GM12878 (cell line): ENCODE measurements at regions of chr5 and their contacts with region 1.

Region 1: DNA sequence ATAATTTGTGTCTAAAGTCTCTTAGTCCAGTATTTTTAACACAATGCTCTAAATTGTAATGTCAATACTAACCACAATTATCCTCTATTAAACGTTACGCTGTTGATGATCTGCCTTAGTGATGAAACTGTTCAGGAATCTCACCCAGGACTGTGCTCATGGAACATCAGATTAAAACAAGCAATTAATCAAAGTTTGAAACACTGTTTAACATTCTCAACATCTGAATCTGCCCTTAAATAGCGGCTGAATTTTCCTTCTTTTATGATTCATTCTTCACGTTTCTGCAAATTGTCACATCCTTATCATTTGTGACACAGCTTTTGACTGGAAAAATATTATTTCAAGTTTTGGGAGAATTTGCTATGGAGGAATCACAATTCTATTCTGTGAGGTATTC is 113.8 kb downstream of the MARCHF11 start:
- DNase-seq: no peak
- ATAC-seq: no peak
- H3K4me3 ChIP-seq: no peak overlapping the region
- H3K27ac ChIP-seq: no peak overlapping the region
- H3K4me1 ChIP-seq: no peaks in the 10 kb centered on the region
- H3K27me3 ChIP-seq: no peaks in the 10 kb centered on the region
- CTCF ChIP-seq: no peak
- EP300 ChIP-seq: no peak
- POLR2A ChIP-seq: no peak
- RAD21 ChIP-seq: no peak

Region 2: GRCh38 chr5:16005225-16005624 is 60.6 kb before region 1 on chr5:
- CTCF ChIA-PET with region 1: no interaction called
- POLR2A ChIA-PET with region 1: no interaction called
- RAD21 ChIA-PET with region 1: no interaction called
- SMC1A ChIA-PET with region 1: no interaction called
- in situ Hi-C with region 1: no loop called
- intact Hi-C with region 1: loop called (anchors 1 kb)
- DNase-seq: peak; percentile 9
- ATAC-seq: peak; percentile 99
- H3K4me3 ChIP-seq: no peak overlapping the region
- H3K27ac ChIP-seq: no peak overlapping the region
- H3K4me1 ChIP-seq: no peaks in the 10 kb centered on the region
- H3K27me3 ChIP-seq: no peaks in the 10 kb centered on the region
- CTCF ChIP-seq: no peak
- EP300 ChIP-seq: no peak
- POLR2A ChIP-seq: no peak
- RAD21 ChIP-seq: no peak

Region 3: DNA sequence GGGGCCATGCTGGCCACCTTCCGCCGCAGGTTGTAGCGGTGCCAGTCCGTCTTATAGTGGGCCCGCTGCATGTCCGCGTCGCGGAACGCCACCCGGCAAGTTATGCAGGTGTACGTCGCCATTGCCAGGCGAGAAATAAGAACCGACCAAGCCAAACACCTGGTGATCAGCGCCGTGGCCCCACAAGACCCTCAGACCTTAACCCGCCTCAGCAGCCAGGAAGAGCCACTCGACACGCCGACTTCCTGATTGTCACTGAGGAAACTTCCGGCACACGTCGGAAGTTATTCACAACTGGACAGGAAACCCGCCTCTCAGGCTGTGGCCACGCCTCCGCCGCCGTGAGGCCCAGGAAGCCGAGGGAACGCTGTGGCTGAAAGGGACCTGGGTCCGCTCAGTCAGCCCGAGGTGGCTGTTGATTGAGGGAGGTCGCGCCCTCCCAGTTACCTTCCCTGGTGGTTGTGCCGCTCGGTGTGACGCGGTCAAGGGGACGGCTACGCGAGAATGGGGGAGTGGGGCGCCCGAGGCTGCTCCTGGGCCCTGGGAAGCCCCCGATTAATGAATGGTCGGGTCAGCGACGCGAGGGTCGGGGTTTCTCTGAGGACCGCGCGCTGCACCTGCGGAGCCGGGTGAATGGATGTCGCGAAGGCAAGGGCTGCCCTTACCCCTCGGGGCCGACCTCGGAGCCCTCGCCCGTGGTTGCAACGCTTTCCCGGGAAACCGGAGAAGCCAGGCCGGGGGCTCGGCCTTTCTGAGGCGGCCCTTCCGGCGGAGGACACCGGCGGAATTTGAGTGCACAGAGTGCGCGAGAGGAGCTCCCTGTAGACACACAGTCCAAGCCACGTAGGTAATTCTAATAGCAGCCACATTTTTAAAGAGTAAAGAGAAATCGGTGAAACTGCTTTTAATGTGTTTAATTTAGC is 400.0 kb after region 1 on chr5 and contains the start of gene ZNF622:
- CTCF ChIA-PET with region 1: no interaction called
- POLR2A ChIA-PET with region 1: no interaction called
- RAD21 ChIA-PET with region 1: no interaction called
- SMC1A ChIA-PET with region 1: no interaction called
- in situ Hi-C with region 1: no loop called
- intact Hi-C with region 1: loop called (anchors 5 kb)
- DNase-seq: peak; percentile 68
- ATAC-seq: peak; percentile 87
- H3K4me3 ChIP-seq: peak within 1 kb of the TSS; percentile 95
- H3K27ac ChIP-seq: peak within 1 kb of the TSS; percentile 94
- H3K4me1 ChIP-seq: peaks cover 24% of the 10 kb centered on the region
- H3K27me3 ChIP-seq: no peaks in the 10 kb centered on the region
- CTCF ChIP-seq: no peak
- EP300 ChIP-seq: no peak
- POLR2A ChIP-seq: peak; percentile 99
- RAD21 ChIP-seq: no peak
- polyA plus RNA-seq, gene ZNF622: 9.0 to 18.1 TPM

Region 4: GRCh38 chr5:16552666-16553343 is 487.0 kb after region 1 on chr5:
- CTCF ChIA-PET with region 1: no interaction called
- POLR2A ChIA-PET with region 1: no interaction called
- RAD21 ChIA-PET with region 1: no interaction called
- SMC1A ChIA-PET with region 1: no interaction called
- in situ Hi-C with region 1: no loop called
- intact Hi-C with region 1: no loop called
- DNase-seq: no peak
- ATAC-seq: peak; percentile 89
- H3K4me3 ChIP-seq: no peak overlapping the region
- H3K27ac ChIP-seq: no peak overlapping the region
- H3K4me1 ChIP-seq: no peaks in the 10 kb centered on the region
- H3K27me3 ChIP-seq: no peaks in the 10 kb centered on the region
- CTCF ChIP-seq: peak; percentile 67 to 90 (median 81)
- EP300 ChIP-seq: no peak
- POLR2A ChIP-seq: no peak
- RAD21 ChIP-seq: peak; percentile 51